Dorsolateral prefrontal cortex (tissue), 120 donors: ENCODE measurements at regions of chr5 and their contacts with region 1.

Region 1: GRCh38 chr5:10145923-10146401 is 103.7 kb downstream of the ATPSCKMT start:
- DNase-seq: no peak
- H3K4me3 ChIP-seq: no peak overlapping the region
- H3K27ac ChIP-seq: no peak overlapping the region
- H3K27me3 ChIP-seq: no peaks in the 10 kb centered on the region
- CTCF ChIP-seq: peak in 55 of 56 donors; percentile 30 to 74 (median 56)

Region 2: DNA sequence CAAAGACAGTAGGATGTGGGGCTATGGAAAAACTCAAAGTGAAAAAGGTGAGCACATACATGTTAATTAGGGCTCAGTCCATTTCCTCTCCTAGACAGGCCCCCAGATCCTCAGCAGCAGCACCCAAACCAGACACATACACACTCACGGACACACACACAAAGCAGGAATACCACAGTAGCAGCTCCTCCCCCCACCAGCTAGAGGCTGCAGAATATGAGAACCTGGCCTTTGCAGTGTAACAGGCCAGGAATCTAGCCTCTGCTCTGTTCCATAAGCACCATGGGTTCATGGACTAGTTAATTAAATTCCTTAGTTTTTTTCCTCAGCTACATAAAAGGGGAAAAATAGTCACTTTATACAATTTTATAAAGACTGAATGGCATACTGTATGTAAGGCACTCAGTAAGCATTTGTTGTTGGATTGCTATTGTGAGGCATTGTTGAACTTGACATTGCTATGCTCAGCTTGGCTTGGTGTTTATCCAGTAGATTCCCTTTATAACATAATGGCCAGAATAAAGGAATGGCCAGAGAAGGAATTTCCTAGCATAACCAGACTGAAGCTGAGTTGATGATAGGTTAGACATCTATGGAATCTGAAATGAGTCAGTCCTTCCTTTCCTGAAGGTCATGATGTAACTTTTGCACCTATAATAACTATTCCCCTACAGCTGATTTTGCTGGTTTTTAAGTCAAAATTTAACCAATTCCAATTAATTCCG is 786.8 kb before region 1 on chr5:
- intact Hi-C with region 1: loop called in 1 of 2 experiments (anchors 5 kb)
- DNase-seq: no peak
- H3K4me3 ChIP-seq: no peak overlapping the region
- H3K27ac ChIP-seq: no peak overlapping the region
- H3K27me3 ChIP-seq: no peaks in the 10 kb centered on the region
- CTCF ChIP-seq: no peak

Region 3: GRCh38 chr5:9774472-9775079 is 371.4 kb before region 1 on chr5:
- intact Hi-C with region 1: loop called in 1 of 2 experiments (anchors 5 kb)
- DNase-seq: peak in 2 of 10 donors; percentile 17 to 35
- H3K4me3 ChIP-seq: no peak overlapping the region
- H3K27ac ChIP-seq: no peak overlapping the region
- H3K27me3 ChIP-seq: no peaks in the 10 kb centered on the region
- CTCF ChIP-seq: peak in 27 of 56 donors; percentile 13 to 48 (median 30)